ENCODE measurements at regions of chr9 and their contacts with region 1.

Region 1: GRCh38 chr9:33721674-33722358 is 73.5 kb upstream of the PRSS3 start:
- DNase-seq: peak; percentile 82
- CTCF ChIP-seq: peak; percentile 100

Region 2: GRCh38 chr9:33649463-33649862 is 72.4 kb before region 1 on chr9:
- CTCF ChIA-PET with region 1: interaction called, 10 read pairs
- POLR2A ChIA-PET with region 1: no interaction called
- DNase-seq: no peak
- CTCF ChIP-seq: no peak

Region 3: GRCh38 chr9:33709269-33709668 is 12.5 kb before region 1 on chr9:
- CTCF ChIA-PET with region 1: interaction called, 22 read pairs
- POLR2A ChIA-PET with region 1: no interaction called
- DNase-seq: no peak
- CTCF ChIP-seq: no peak

Region 4: GRCh38 chr9:33737811-33738606 is 16.2 kb after region 1 on chr9:
- CTCF ChIA-PET with region 1: interaction called, 13 read pairs
- POLR2A ChIA-PET with region 1: no interaction called
- DNase-seq: peak; percentile 41
- CTCF ChIP-seq: peak; percentile 56

Region 5: DNA sequence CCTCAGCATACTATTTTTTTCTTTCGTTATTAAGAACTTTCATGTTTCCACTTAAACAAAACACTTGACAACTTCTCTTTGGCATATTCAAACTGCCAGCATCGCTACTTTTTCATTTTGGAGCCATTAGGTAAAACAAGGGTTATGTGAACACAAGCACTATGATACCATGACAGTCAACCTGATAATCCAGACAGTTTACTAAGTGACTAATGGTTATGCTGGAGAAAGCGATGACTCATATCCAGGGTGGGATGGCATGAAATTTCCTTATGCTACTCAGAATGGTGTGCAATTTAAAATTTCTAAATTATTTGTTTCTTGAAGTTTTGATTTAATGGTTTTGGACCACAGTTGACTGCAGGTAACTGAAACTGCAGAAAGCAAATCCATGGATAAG is 43.6 kb after region 1 on chr9:
- CTCF ChIA-PET with region 1: no interaction called
- POLR2A ChIA-PET with region 1: no interaction called
- DNase-seq: no peak
- CTCF ChIP-seq: no peak